BJ (cell line): ENCODE measurements at regions of chr2 and their contacts with region 1.

Region 1: DNA sequence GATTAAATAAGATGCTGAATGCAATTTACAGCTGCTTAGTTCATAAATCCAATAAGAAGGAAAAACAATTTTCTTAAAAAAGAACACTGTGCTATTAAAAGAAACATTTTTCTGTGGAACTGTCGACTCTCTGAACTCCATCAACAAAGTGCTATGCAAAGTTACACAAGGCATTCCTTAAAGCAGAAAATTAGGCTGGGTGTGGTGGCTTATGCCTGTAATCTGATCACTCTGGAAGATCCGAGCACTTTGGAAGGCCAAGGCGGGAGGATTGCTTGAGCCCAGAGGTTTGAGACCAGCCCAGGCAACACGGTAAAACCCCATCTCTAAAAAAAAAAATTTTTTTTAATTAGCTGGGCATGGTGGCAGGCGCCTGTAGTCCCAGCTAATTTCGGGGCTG is 13.0 kb downstream of the MCM6 start:
- DNase-seq: no peak
- H3K4me3 ChIP-seq: no peak overlapping the region
- H3K27me3 ChIP-seq: no peaks in the 10 kb centered on the region
- CTCF ChIP-seq: no peak

Region 2: GRCh38 chr2:135557530-135557929 is 305.7 kb before region 1 on chr2:
- CTCF ChIA-PET with region 1: no interaction called
- POLR2A ChIA-PET with region 1: no interaction called
- DNase-seq: no peak
- H3K4me3 ChIP-seq: no peak overlapping the region
- H3K27me3 ChIP-seq: no peaks in the 10 kb centered on the region
- CTCF ChIP-seq: no peak

Region 3: DNA sequence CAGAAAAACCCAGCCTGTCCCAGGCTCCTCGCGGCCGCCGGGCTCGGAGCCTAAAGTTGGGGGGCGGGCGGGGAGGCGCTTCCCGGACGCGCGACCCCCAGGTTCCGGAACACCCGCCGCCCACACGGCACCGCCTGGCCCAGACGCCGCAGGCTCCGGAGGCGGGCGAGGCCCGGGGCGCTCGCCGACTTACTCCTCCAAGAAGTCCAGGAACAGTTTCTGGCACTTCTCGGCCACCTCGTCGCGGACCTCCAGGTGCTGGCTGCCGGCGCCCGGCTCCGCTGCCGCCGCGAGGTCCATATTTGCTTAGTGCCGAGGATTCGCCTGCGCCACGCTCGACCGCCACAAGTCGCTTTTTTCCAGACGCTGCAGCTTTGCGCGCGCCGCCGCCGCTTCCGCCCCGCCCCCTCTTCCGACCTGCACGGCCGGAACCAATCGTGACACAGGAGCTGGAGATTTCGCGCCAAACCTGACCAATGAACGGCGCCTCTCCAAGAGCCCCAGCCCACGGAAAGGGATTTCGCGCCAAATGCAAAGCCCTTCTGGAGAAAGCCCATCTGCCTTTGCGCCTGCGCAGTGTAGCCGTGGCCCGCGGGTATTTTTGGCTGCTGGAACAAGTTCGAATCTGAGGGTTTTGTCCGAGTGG is 13.0 kb after region 1 on chr2 and contains the start of gene MCM6:
- CTCF ChIA-PET with region 1: interaction called, 13 read pairs
- POLR2A ChIA-PET with region 1: no interaction called
- DNase-seq: peak; percentile 96
- H3K4me3 ChIP-seq: peak within 1 kb of the TSS; percentile 50
- H3K27me3 ChIP-seq: no peaks in the 10 kb centered on the region
- CTCF ChIP-seq: 0 out of 2 replicates have a peak, but pooled peaks have one; percentile 9
- polyA plus RNA-seq, gene MCM6: 15.7 and 23.3 TPM in 2 replicates

Region 4: DNA sequence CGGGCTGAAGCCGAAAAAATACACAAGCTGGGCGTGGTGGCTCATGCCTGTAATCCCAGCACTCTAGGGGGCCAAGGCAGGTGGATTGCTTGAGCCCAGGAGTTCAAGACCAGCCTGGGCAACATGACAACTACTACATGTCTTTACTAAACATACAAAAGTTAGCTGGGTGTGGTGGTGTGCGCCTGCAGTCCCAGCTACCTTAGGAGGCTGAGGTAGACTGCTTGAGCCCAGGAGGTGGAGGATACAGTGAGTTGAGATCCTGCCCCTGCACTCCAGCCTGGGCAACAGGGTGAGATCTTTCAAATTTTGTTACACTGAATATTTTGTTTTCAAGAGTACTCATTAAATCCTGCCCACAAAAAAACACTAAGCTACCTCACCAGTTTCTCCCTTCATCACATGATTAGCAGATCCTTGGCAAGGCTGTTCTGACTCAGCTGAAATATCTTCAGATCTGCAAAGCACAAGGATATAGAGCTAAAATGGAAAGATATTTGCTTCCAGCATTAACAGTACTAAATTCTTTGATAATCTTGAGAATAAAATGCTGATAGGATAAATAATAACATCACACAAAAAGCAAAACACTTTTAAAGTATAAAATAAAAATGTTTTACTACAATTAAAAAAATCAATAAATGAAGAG is 41.2 kb after region 1 on chr2:
- CTCF ChIA-PET with region 1: no interaction called
- POLR2A ChIA-PET with region 1: interaction called, 15 read pairs
- DNase-seq: peak; percentile 32
- H3K4me3 ChIP-seq: no peak overlapping the region
- H3K27me3 ChIP-seq: no peaks in the 10 kb centered on the region
- CTCF ChIP-seq: no peak

Region 5: GRCh38 chr2:136225950-136226835 is 363.0 kb after region 1 on chr2:
- CTCF ChIA-PET with region 1: no interaction called
- POLR2A ChIA-PET with region 1: no interaction called
- DNase-seq: no peak
- H3K4me3 ChIP-seq: no peak overlapping the region
- H3K27me3 ChIP-seq: no peaks in the 10 kb centered on the region
- CTCF ChIP-seq: no peak